Testis (tissue), 5 donors: ENCODE measurements at regions of chr4 and their contacts with region 1.

Region 1: GRCh38 chr4:2262143-2262943 is 434 bp upstream of the MXD4 start:
- DNase-seq: peak; percentile 100
- H3K4me3 ChIP-seq: peak overlapping the region; percentile 74 to 82
- H3K27ac ChIP-seq: peak overlapping the region; percentile 94 to 96
- H3K4me1 ChIP-seq: peaks cover 47% of the 10 kb centered on the region
- H3K27me3 ChIP-seq: no peaks in the 10 kb centered on the region
- CTCF ChIP-seq: peak in 1 of 3 experiments; percentile 15
- POLR2A ChIP-seq: peak; percentile 92

Region 2: GRCh38 chr4:1712216-1713002 is 549.9 kb before region 1 on chr4 and contains the start of gene SLBP:
- intact Hi-C with region 1: loop called (anchors 5 kb)
- DNase-seq: peak; percentile 97
- H3K4me3 ChIP-seq: peak within 1 kb of the TSS; percentile 93 to 95
- H3K27ac ChIP-seq: peak within 1 kb of the TSS; percentile 96 to 100
- H3K4me1 ChIP-seq: peaks cover 37% of the 10 kb centered on the region
- H3K27me3 ChIP-seq: no peaks in the 10 kb centered on the region
- CTCF ChIP-seq: peak in 1 of 3 experiments; percentile 3
- POLR2A ChIP-seq: peak; percentile 66
- total RNA-seq, gene SLBP: 137 to 173 TPM

Region 3: DNA sequence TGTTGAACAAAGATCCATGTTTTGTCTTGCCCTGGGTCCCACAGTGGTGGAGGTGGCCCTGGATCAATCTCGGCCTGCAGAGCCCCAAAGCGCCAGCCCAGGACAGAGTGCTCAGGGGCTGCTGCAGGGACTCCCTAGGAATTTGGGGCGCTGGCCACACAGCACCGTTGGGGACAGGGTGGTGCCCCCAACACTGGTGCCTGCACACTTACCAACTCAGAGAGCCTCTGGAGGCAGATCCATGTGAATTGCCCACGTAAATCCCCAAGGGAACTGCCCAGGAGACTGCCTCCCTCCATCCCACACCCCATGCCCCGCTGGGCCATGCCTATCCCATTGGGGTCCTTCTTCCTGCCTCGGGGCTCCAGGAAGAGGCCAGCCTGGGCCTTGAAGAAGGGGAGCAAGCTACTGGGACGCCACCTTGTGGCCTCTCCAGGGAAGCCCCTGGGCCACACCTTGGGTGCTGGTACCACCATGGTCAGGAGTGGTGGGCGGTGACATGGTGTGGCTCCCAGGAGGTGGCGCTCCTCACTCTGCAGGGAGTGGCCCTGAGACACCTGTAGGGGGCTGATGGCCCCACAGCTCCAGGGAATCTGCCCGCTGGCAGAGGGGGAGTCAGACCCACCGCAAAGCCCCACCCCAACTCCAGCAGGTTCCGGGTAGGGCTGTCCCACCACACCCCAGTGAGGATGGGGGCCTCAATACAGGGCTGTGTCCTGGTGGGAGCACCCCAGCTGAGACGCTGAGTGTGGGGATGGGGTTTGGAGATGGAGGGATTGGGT is 179.2 kb after region 1 on chr4:
- intact Hi-C with region 1: no loop called
- DNase-seq: peak; percentile 81
- H3K4me3 ChIP-seq: no peak overlapping the region
- H3K27ac ChIP-seq: no peak overlapping the region
- H3K4me1 ChIP-seq: no peaks in the 10 kb centered on the region
- H3K27me3 ChIP-seq: no peaks in the 10 kb centered on the region
- CTCF ChIP-seq: peak; percentile 56 to 76 (median 65)
- POLR2A ChIP-seq: no peak